Naive thymus-derived CD8-positive, alpha-beta T cell (primary cell): ENCODE measurements at regions of chr11 and their contacts with region 1.

Region 1: GRCh38 chr11:118304568-118305248 is at the start of gene CD3E:
- DNase-seq: peak; percentile 25 to 85 (median 67)
- ATAC-seq: peak; percentile 65 to 75
- H3K4me3 Mint-ChIP-seq: peak within 1 kb of the TSS; percentile 90 to 100 (median 99)
- H3K27ac Mint-ChIP-seq: peak within 1 kb of the TSS; percentile 98 to 100 (median 99)
- H3K4me1 Mint-ChIP-seq: peaks cover 44 to 90% (median 78%) of the 10 kb centered on the region in 4 donors
- H3K27me3 Mint-ChIP-seq: no peaks in the 10 kb centered on the region
- polyA plus RNA-seq, gene CD3E: 811 to 1,213 (median 948) TPM

Region 2: DNA sequence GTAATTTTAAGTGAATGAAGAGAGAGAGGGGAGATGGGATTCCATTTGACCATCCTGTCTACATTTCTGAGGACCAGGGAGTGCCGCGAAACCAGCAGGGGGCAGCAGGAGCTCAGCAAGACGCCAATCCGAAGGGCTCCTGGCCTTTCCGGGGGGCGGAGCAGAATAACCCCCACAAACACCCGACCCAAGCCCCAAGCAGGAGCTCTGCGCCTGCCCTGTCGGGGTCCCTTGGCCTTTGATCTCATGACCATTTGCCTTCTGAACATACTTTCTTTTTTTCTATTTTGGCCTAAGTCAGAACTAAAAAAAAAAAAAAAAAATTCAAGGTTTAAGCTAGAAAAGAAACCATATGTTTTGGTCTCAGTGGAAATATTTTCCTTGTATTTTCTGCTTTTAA is 106.3 kb before region 1 on chr11:
- POLR2A ChIA-PET with region 1: interaction called, 10 read pairs
- DNase-seq: peak; percentile 72 to 91 (median 82)
- ATAC-seq: peak; percentile 42
- H3K4me3 Mint-ChIP-seq: peak overlapping the region in 5 of 10 donors; percentile 21 to 52 (median 36)
- H3K27ac Mint-ChIP-seq: peak overlapping the region; percentile 26 to 93 (median 81)
- H3K4me1 Mint-ChIP-seq: peaks cover 5 to 14% (median 13%) of the 10 kb centered on the region in 4 donors
- H3K27me3 Mint-ChIP-seq: no peaks in the 10 kb centered on the region

Region 3: DNA sequence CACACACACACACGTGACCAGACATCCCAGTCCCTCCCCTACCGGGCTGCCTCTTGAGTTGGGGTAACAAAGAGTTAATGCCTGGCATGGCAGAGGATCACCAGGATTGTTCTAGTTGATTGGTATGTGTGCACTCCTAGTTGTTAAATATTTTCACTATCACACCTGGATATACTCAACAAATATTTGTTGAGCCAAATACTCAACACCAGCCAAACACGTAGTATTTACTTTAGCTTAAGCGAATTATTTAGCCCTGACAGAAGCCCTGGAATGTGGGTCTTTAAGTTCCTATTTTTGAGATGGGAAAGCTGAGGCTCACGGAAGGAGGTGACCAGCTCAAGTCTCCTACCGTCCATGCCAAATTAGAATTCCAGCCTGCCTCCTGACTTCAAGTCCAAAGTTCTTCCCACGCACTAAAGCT is 10.3 kb after region 1 on chr11:
- POLR2A ChIA-PET with region 1: interaction called, 33 read pairs
- DNase-seq: no peak
- ATAC-seq: no peak
- H3K4me3 Mint-ChIP-seq: peak overlapping the region in 8 of 10 donors; percentile 68 to 87 (median 80)
- H3K27ac Mint-ChIP-seq: peak overlapping the region; percentile 91 to 100 (median 98)
- H3K4me1 Mint-ChIP-seq: peaks cover 54 to 95% (median 93%) of the 10 kb centered on the region in 4 donors
- H3K27me3 Mint-ChIP-seq: no peaks in the 10 kb centered on the region

Region 4: DNA sequence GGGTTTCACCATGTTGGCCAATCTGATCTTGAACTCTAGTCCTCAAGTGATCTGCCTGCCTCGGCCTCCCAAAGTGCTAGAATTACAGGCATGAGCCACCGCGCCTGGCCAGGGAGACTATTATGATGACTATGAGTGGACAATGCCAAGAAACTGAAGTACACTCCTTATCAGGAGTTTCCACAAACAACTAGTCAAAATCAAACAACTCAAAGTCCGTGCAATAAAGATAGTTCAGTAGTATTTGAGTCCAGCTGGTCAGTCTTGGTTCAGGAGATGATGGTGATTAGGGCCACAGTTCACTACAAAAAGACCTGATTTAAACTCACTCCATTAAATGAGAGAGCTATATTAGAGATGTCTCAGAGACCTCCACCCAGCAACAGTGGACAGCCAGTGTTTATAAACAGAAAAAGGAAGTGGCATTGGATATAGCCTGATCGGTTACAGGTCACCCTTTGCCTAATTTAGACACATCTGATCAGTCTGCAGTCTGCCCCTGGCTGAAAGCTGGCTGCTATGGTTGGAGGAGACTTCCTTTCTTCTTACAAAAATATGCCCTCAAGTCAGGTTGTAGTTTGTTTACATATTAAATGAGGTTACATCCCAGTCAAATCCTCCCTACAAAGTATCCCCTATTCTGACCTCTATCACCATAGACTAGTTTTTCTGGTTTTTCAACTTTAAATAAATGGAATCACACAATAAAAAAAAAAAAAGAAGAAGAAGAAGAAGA is 16.8 kb after region 1 on chr11:
- POLR2A ChIA-PET with region 1: interaction called, 33 read pairs
- DNase-seq: no peak
- ATAC-seq: no peak
- H3K4me3 Mint-ChIP-seq: peak overlapping the region in 9 of 10 donors; percentile 14 to 78 (median 62)
- H3K27ac Mint-ChIP-seq: peak overlapping the region; percentile 54 to 99 (median 86)
- H3K4me1 Mint-ChIP-seq: peaks cover 38 to 83% (median 70%) of the 10 kb centered on the region in 4 donors
- H3K27me3 Mint-ChIP-seq: no peaks in the 10 kb centered on the region

Region 5: DNA sequence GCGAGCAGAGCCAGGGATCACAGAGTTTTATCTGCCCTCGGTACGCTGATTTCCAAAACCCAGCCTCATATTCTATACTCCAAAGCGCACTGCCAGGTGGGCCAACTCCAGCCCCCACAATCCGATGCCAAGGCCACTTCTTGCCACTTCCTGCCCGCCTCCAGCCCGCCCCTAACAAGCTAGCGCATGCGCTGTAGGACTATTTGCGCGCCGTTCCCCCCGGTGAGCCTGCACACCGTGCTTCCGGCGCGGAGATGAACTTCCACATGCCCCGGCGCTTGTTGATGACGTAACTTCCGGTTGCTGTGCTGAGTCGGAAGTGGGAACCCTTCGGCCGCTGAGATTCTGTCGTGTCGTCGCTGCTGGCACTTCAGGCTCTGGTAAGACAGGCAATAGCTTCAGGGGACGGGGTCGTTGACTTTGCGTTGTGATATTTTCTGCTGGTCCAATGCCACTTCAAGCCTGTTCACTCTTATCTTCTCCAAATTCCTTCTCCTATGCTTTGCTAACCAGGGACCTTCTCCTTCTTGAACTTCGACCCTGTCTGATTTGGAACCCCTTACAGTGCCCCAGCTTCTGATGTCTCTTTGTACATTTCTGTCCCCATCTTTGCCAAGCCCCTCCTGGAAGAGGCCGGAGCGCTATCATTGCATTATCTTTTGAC is 54.7 kb after region 1 on chr11 and contains the start of gene UBE4A:
- POLR2A ChIA-PET with region 1: interaction called, 28 read pairs
- DNase-seq: peak; percentile 90 to 99 (median 96)
- ATAC-seq: peak; percentile 86 to 93
- H3K4me3 Mint-ChIP-seq: peak within 1 kb of the TSS; percentile 85 to 98 (median 94)
- H3K27ac Mint-ChIP-seq: peak within 1 kb of the TSS; percentile 97 to 99 (median 98)
- H3K4me1 Mint-ChIP-seq: peaks cover 32 to 56% (median 55%) of the 10 kb centered on the region in 4 donors
- H3K27me3 Mint-ChIP-seq: peaks cover 0 to 4% (median 0%) of the 10 kb centered on the region in 5 donors
- polyA plus RNA-seq, gene UBE4A: 20.7 to 31.0 (median 24.3) TPM

Region 6: GRCh38 chr11:118370774-118371173 is 66.1 kb after region 1 on chr11:
- POLR2A ChIA-PET with region 1: no interaction called
- DNase-seq: no peak
- ATAC-seq: no peak
- H3K4me3 Mint-ChIP-seq: no peak overlapping the region
- H3K27ac Mint-ChIP-seq: peak overlapping the region in 2 of 10 donors; percentile 32 to 62
- H3K4me1 Mint-ChIP-seq: peaks cover 0 to 9% (median 2%) of the 10 kb centered on the region in 4 donors
- H3K27me3 Mint-ChIP-seq: no peaks in the 10 kb centered on the region